Naive thymus-derived CD4-positive, alpha-beta T cell (primary cell): ENCODE measurements at regions of chr9 and their contacts with region 1.

Region 1: GRCh38 chr9:95425910-95426551 is 90.7 kb downstream of the PTCH1 start:
- DNase-seq: peak in 1 of 9 donors; percentile 4
- ATAC-seq: no peak
- H3K4me3 ChIP-seq: peak overlapping the region; percentile 3
- H3K4me3 Mint-ChIP-seq: peak overlapping the region; percentile 53 to 79 (median 72)
- H3K27ac ChIP-seq: no peak overlapping the region
- H3K27ac Mint-ChIP-seq: peak overlapping the region in 2 of 9 donors; percentile 29 to 52
- H3K4me1 ChIP-seq: peaks cover 7 to 11% of the 10 kb centered on the region in 2 donors
- H3K4me1 Mint-ChIP-seq: peaks cover 0 to 17% (median 11%) of the 10 kb centered on the region in 7 donors
- H3K27me3 ChIP-seq: no peaks in the 10 kb centered on the region
- H3K27me3 Mint-ChIP-seq: peaks cover 0 to 15% (median 4%) of the 10 kb centered on the region in 5 donors

Region 2: DNA sequence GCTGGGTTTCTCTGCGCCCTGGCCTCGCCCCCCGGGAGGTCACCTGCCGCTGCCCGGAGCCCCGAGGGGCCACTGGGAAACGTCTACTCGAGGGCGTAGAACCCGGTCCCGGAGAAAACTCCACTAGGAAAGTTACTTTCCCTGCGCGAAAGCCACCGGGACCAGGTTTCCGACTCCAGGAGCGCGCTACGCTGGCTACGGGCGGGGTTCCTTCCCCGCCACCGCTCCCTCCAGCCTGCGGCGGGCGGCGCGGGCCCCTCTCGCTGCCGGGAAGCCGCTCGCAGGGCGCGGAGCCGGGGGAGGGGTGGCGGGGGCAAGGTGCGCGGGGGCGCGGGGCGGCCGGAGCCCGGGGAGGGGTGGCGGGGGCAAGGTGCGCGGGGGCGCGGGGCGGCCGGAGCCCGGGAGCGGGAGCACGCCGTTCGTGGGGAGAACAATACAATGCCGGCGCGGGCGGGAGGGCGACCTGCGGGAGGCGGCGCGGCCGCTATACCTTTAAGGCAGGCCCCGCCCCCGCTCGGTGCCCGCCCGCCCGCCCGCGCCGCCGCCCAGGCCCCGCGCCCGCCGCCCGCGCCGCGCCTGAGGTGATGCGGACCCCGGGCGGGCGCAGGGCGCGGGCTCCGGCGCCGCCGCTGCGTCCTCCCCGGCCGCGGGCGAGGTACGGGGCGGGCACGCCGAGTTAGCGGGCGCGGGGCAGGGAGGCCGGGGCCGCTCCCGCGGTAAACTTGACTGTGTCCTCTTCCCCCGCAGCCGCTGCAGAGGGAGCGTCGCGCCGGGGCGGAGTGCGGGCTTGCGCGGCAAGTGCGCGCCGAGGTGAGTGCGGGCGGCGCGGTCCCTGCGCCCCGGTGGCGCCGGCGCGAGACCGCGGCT is 421.4 kb before region 1 on chr9:
- CTCF ChIA-PET with region 1: no interaction called
- POLR2A ChIA-PET with region 1: no interaction called
- intact Hi-C with region 1: no loop called
- DNase-seq: peak in 6 of 9 donors; percentile 7 to 63 (median 18)
- ATAC-seq: peak; percentile 74
- H3K4me3 ChIP-seq: peak overlapping the region; percentile 51
- H3K4me3 Mint-ChIP-seq: peak overlapping the region in 5 of 10 donors; percentile 80 to 87 (median 81)
- H3K27ac ChIP-seq: no peak overlapping the region
- H3K27ac Mint-ChIP-seq: peak overlapping the region in 1 of 9 donors; percentile 76
- H3K4me1 ChIP-seq: peaks cover 7% of the 10 kb centered on the region in 2 donors
- H3K4me1 Mint-ChIP-seq: peaks cover 0 to 27% (median 9%) of the 10 kb centered on the region in 7 donors
- H3K27me3 ChIP-seq: peaks cover 11 to 13% of the 10 kb centered on the region in 2 donors
- H3K27me3 Mint-ChIP-seq: peaks cover 28 to 41% (median 37%) of the 10 kb centered on the region in 5 donors

Region 3: GRCh38 chr9:95268681-95269080 is 157.3 kb before region 1 on chr9:
- CTCF ChIA-PET with region 1: no interaction called
- POLR2A ChIA-PET with region 1: no interaction called
- intact Hi-C with region 1: no loop called
- DNase-seq: no peak
- ATAC-seq: no peak
- H3K4me3 ChIP-seq: no peak overlapping the region
- H3K4me3 Mint-ChIP-seq: no peak overlapping the region
- H3K27ac ChIP-seq: no peak overlapping the region
- H3K27ac Mint-ChIP-seq: peak overlapping the region in 2 of 9 donors; percentile 12 to 32
- H3K4me1 ChIP-seq: peaks cover 0 to 4% of the 10 kb centered on the region in 2 donors
- H3K4me1 Mint-ChIP-seq: peaks cover 9 to 49% (median 27%) of the 10 kb centered on the region in 7 donors
- H3K27me3 ChIP-seq: no peaks in the 10 kb centered on the region
- H3K27me3 Mint-ChIP-seq: no peaks in the 10 kb centered on the region

Region 4: GRCh38 chr9:95363051-95363841 is 62.8 kb before region 1 on chr9:
- CTCF ChIA-PET with region 1: no interaction called
- POLR2A ChIA-PET with region 1: no interaction called
- intact Hi-C with region 1: no loop called
- DNase-seq: no peak
- ATAC-seq: no peak
- H3K4me3 ChIP-seq: no peak overlapping the region
- H3K4me3 Mint-ChIP-seq: no peak overlapping the region
- H3K27ac ChIP-seq: no peak overlapping the region
- H3K27ac Mint-ChIP-seq: no peak overlapping the region
- H3K4me1 ChIP-seq: no peaks in the 10 kb centered on the region
- H3K4me1 Mint-ChIP-seq: no peaks in the 10 kb centered on the region
- H3K27me3 ChIP-seq: no peaks in the 10 kb centered on the region
- H3K27me3 Mint-ChIP-seq: peaks cover 9 to 35% (median 15%) of the 10 kb centered on the region in 5 donors

Region 5: DNA sequence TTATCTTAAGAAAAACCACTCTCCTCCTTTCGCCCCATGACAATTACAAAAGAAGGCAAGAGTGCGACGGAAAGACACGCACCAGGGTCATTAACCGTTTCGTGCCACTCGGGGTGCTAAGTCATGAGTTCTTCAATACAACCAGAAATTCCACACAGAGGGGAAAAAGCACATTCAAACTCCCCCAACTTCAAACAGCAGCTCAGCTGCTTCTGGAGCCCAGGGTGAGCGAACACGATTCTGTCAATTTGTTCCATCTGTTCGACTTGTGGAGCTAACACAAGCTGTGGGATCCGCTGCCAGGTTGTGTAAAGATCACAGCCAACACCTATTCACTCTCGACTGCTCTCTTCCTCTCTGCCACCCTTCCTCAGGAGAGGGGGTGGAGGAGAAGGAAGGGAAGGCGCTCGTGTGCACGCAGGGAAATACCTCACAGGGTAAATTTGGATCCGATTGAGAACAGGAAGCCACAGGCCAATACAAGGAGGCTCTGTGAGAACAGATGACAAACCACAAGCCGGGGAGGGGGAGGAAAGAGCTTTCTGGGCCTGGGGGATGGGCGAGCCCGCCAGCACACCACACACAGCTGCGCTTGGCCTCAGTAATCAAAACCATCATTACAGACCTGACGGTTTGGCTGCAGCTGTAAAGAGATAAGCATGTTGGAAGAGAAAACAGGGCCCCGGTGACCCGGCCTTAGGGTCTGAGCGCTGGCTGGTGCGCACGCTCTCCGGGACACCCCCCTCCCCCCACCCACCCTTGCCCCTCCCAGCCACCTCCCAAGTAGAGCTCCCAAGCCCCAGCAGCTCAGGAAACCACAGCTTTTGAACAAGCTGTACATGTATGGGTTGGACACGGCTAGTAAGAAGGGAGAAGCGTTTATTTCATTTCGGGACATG is 36.5 kb after region 1 on chr9:
- CTCF ChIA-PET with region 1: no interaction called
- POLR2A ChIA-PET with region 1: interaction called, 3 read pairs
- intact Hi-C with region 1: loop called in 1 of 2 experiments (anchors 2 kb)
- DNase-seq: peak; percentile 47 to 91 (median 86)
- ATAC-seq: peak; percentile 98
- H3K4me3 ChIP-seq: peak overlapping the region; percentile 45
- H3K4me3 Mint-ChIP-seq: peak overlapping the region; percentile 80 to 91 (median 85)
- H3K27ac ChIP-seq: no peak overlapping the region
- H3K27ac Mint-ChIP-seq: peak overlapping the region; percentile 25 to 92 (median 76)
- H3K4me1 ChIP-seq: peaks cover 24 to 26% of the 10 kb centered on the region in 2 donors
- H3K4me1 Mint-ChIP-seq: peaks cover 22 to 53% (median 44%) of the 10 kb centered on the region in 7 donors
- H3K27me3 ChIP-seq: no peaks in the 10 kb centered on the region
- H3K27me3 Mint-ChIP-seq: peaks cover 0 to 59% (median 0%) of the 10 kb centered on the region in 5 donors